ENCODE measurements at regions of chr14 and their contacts with region 1.

Region 1: GRCh38 chr14:55051426-55052268 is at the start of gene MAPK1IP1L:
- DNase-seq: peak; percentile 94
- ATAC-seq: peak; percentile 93
- H3K4me3 Mint-ChIP-seq: peak within 1 kb of the TSS; percentile 93
- H3K27ac Mint-ChIP-seq: peak within 1 kb of the TSS; percentile 100
- H3K4me1 Mint-ChIP-seq: peaks cover 30% of the 10 kb centered on the region
- H3K27me3 Mint-ChIP-seq: no peaks in the 10 kb centered on the region
- CTCF ChIP-seq: peak; percentile 95
- total RNA-seq, gene MAPK1IP1L: 97.9 to 107 TPM (median 107 TPM) in 3 replicates

Region 2: GRCh38 chr14:55026793-55027561 is 24.7 kb before region 1 on chr14 and contains the starts of genes SOCS4 and WDHD1:
- CTCF ChIA-PET with region 1: interaction called, 43 read pairs
- POLR2A ChIA-PET with region 1: interaction called, 44 read pairs
- DNase-seq: peak; percentile 94
- ATAC-seq: peak; percentile 86
- H3K4me3 Mint-ChIP-seq: peak within 1 kb of the TSS; percentile 86
- H3K27ac Mint-ChIP-seq: peak within 1 kb of the TSS; percentile 97
- H3K4me1 Mint-ChIP-seq: peaks cover 56% of the 10 kb centered on the region
- H3K27me3 Mint-ChIP-seq: no peaks in the 10 kb centered on the region
- CTCF ChIP-seq: no peak
- total RNA-seq, gene SOCS4: 20.7 to 21.3 TPM (median 21.2 TPM) in 3 replicates
- total RNA-seq, gene WDHD1: 64.4 to 76.1 TPM (median 67.3 TPM) in 3 replicates

Region 3: GRCh38 chr14:55065411-55065810 is 13.8 kb after region 1 on chr14:
- CTCF ChIA-PET with region 1: interaction called, 21 read pairs
- POLR2A ChIA-PET with region 1: interaction called, 3 read pairs
- DNase-seq: no peak
- ATAC-seq: no peak
- H3K4me3 Mint-ChIP-seq: no peak overlapping the region
- H3K27ac Mint-ChIP-seq: no peak overlapping the region
- H3K4me1 Mint-ChIP-seq: no peaks in the 10 kb centered on the region
- H3K27me3 Mint-ChIP-seq: no peaks in the 10 kb centered on the region
- CTCF ChIP-seq: no peak

Region 4: GRCh38 chr14:55071870-55072640 is 20.4 kb after region 1 on chr14:
- CTCF ChIA-PET with region 1: interaction called, 21 read pairs
- POLR2A ChIA-PET with region 1: interaction called, 5 read pairs
- DNase-seq: no peak
- ATAC-seq: no peak
- H3K4me3 Mint-ChIP-seq: no peak overlapping the region
- H3K27ac Mint-ChIP-seq: peak overlapping the region; percentile 18; the same call in 1 of the 2 replicates
- H3K4me1 Mint-ChIP-seq: peaks cover 20% of the 10 kb centered on the region
- H3K27me3 Mint-ChIP-seq: no peaks in the 10 kb centered on the region
- CTCF ChIP-seq: no peak

Region 5: GRCh38 chr14:55077155-55077554 is 25.5 kb after region 1 on chr14:
- CTCF ChIA-PET with region 1: interaction called, 21 read pairs
- POLR2A ChIA-PET with region 1: interaction called, 5 read pairs
- DNase-seq: no peak
- ATAC-seq: peak; percentile 32; the same call in 1 of the 2 replicates
- H3K4me3 Mint-ChIP-seq: no peak overlapping the region
- H3K27ac Mint-ChIP-seq: no peak overlapping the region
- H3K4me1 Mint-ChIP-seq: peaks cover 13% of the 10 kb centered on the region
- H3K27me3 Mint-ChIP-seq: no peaks in the 10 kb centered on the region
- CTCF ChIP-seq: no peak

Region 6: GRCh38 chr14:55102141-55102621 is 50.5 kb after region 1 on chr14:
- CTCF ChIA-PET with region 1: interaction called, 12 read pairs
- POLR2A ChIA-PET with region 1: interaction called, 3 read pairs
- DNase-seq: no peak
- ATAC-seq: peak; percentile 57
- H3K4me3 Mint-ChIP-seq: no peak overlapping the region
- H3K27ac Mint-ChIP-seq: peak overlapping the region; percentile 93
- H3K4me1 Mint-ChIP-seq: peaks cover 28% of the 10 kb centered on the region
- H3K27me3 Mint-ChIP-seq: no peaks in the 10 kb centered on the region; the same call in 1 of the 2 replicates
- CTCF ChIP-seq: no peak